Ovary (tissue), 10 donors: ENCODE measurements at regions of chr15 and their contacts with region 1.

Region 1: GRCh38 chr15:46618984-46619383 is 984.2 kb downstream of the SQOR start:
- DNase-seq: no peak
- H3K4me3 ChIP-seq: no peak overlapping the region
- H3K27ac ChIP-seq: no peak overlapping the region
- H3K4me1 ChIP-seq: no peaks in the 10 kb centered on the region
- H3K27me3 ChIP-seq: no peaks in the 10 kb centered on the region
- CTCF ChIP-seq: no peak
- EP300 ChIP-seq: no peak
- POLR2A ChIP-seq: no peak

Region 2: DNA sequence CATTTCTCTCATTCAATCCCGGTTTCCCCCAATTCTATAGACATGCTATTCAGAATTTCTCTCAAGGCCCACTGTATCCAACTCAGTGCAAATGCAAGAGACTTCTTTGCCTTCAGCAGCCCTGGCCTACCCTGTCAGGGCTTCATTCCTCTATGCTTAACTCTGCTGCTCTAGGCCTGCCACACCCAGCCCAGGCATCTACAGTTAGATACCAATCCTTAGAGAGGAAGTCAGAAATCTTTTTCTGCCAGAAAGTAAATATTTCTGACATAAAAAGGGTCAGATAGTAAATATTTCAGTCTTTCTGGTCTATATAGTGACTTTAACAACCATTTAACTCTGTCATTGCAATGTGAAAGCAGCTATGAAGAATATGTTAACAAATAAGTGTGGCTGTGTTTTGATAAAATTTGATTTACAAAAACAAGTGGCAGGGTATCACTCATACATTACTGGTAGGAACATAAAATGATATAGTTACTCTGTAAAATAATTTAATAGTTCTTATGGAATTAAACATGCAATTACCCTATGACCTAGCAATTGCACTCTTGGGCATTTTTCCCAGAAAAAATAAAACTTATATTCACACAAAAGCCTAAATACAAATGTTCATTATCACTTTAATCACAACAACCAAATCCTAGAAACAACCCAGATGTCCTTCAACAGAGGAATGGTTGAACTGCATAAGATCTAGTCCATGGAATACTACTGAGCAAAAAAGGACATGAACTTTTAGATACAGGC is 42.2 kb before region 1 on chr15:
- intact Hi-C with region 1: loop called in 1 of 4 experiments (anchors 2 kb)
- DNase-seq: no peak
- H3K4me3 ChIP-seq: no peak overlapping the region
- H3K27ac ChIP-seq: no peak overlapping the region
- H3K4me1 ChIP-seq: no peaks in the 10 kb centered on the region
- H3K27me3 ChIP-seq: no peaks in the 10 kb centered on the region
- CTCF ChIP-seq: no peak
- EP300 ChIP-seq: no peak
- POLR2A ChIP-seq: no peak

Region 3: DNA sequence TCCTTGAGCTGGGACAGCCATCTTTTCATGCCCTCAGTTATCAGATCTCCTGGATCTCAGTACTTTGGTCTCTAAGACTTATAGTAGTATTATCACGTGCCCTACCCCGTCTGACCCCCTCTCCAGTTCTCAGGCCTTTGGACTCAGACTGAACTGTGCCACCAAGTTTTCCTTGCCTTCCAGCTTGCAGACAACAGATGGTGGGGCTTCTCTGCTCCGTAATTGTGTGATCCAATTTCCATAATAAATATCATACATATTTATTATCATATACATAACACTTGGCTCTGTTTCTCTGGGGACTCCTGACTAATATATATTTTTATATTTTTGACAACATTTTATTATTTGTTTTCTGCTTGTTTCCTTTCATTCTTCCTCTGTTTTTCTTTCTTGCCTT is 639.5 kb after region 1 on chr15:
- intact Hi-C with region 1: no loop called
- DNase-seq: no peak
- H3K4me3 ChIP-seq: no peak overlapping the region
- H3K27ac ChIP-seq: no peak overlapping the region
- H3K4me1 ChIP-seq: no peaks in the 10 kb centered on the region
- H3K27me3 ChIP-seq: no peaks in the 10 kb centered on the region
- CTCF ChIP-seq: no peak
- EP300 ChIP-seq: no peak
- POLR2A ChIP-seq: no peak

Region 4: DNA sequence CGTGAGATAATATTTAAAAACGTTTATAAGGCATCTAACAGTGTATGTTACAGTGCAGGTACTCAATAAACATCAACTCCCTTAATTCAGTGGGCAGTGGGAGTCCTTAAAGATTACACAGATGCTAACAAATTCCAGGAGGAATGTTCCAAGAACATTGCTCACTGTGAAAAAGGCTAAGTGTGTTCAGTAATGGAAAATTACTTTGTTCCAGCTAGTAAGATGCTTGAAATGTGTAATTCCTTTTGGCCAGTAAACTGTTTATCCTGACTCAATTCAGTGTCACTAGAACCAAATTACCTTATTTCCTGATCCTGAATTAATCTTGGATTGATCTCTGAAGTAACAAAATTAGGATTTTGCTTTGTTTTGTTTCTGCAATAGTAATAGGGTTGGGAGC is 1044.1 kb after region 1 on chr15:
- intact Hi-C with region 1: no loop called
- DNase-seq: no peak
- H3K4me3 ChIP-seq: no peak overlapping the region
- H3K27ac ChIP-seq: no peak overlapping the region
- H3K4me1 ChIP-seq: peaks cover 2% of the 10 kb centered on the region
- H3K27me3 ChIP-seq: no peaks in the 10 kb centered on the region
- CTCF ChIP-seq: no peak
- EP300 ChIP-seq: no peak
- POLR2A ChIP-seq: no peak